Endothelial cell of umbilical vein (primary cell): ENCODE measurements at regions of chr19 and their contacts with region 1.

Region 1: DNA sequence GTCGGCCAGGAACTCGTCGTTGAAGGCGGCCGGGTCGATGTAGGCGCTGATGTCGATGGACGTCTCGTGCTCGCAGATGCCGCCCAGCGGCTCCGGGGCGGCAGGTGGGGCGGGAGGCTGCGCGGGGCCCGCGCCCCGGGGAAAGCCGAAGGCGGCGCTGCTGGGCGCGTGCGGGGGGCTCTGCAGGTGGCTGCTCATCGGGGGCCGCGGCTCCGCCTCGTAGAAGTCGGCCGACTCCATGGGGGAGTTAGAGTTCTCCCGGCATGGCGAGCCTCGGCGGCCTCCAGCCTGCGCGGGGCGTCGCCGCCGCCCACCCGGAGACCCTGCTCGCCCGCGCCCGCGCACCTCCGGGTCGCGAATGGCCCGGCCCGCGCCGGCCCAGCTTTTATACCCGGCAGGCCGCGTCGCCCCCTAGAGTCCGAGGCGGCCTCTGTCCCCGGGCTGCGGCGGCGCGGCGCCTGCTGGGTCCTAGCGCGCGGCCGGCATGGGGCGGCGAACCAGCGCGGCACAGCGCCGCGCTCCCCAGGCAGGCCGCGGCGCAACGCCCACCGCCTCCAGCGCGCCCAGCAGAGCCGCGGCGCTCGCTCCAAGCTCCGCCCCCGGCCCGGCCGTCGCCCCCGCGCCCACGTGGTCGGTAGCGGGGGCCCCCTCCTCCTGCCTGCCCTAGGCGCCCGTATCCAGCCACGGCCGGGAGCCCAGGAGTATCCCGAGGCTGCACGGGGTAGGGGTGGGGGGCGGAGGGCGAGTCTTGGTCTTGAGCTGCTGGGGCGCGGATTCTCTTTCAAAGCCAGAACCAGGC is at the start of gene CEBPA:
- DNase-seq: peak; percentile 60
- H3K4me3 ChIP-seq: peak within 1 kb of the TSS; percentile 40 to 64 (median 58)
- H3K27ac ChIP-seq: no peak within 1 kb of the TSS
- H3K4me1 ChIP-seq: peaks cover 9% of the 10 kb centered on the region
- H3K27me3 ChIP-seq: peaks cover 25 to 46% of the 10 kb centered on the region in 2 experiments
- CTCF ChIP-seq: peak; percentile 42 to 52
- POLR2A ChIP-seq: no peak
- total RNA-seq, gene CEBPA: not detected in 2 replicates

Region 2: DNA sequence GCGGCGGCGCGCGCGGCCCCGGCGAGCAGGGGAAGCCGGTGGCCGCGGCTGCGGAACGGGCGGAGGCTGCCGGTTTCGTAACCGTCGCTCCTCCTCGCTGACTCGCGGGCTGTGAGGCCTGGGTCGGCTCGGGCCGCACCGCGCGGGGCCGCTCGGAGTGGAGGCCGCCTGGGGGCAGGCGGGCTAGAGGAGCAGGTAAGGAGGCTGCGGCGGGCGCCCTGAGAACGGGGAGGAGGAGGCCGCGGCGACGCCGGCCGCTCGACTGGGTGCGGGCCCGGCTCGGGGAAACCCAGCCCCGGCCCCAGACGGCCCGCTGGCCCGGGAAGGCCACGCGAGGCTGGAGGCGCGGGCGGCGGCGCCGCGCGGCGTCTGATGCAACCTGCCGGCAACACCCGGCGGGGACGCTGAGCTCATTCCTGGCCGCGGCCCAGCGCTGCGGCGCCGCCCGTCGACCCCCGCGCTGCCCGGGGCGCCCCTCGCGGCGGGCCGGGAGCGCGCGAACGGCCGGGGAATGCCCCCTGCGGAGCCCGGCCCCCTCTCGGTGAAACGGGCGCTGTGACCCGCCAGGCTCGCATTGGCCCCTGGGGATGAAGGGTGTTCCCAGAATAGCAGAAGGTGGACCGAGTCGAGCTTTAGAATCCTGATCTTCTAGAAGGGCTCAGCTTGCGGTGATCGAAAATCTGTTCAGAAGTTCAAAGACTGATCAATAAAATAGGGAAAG is 71.5 kb after region 1 on chr19 and contains the start of gene CEBPG:
- CTCF ChIA-PET with region 1: interaction called, 12 read pairs
- POLR2A ChIA-PET with region 1: no interaction called
- dilution Hi-C with region 1: no loop called
- intact Hi-C with region 1: loop called (anchors 1 kb)
- DNase-seq: peak; percentile 54
- H3K4me3 ChIP-seq: peak within 1 kb of the TSS; percentile 81 to 97 (median 94)
- H3K27ac ChIP-seq: peak within 1 kb of the TSS; percentile 96
- H3K4me1 ChIP-seq: peaks cover 46% of the 10 kb centered on the region
- H3K27me3 ChIP-seq: peaks cover 0 to 1% of the 10 kb centered on the region in 2 experiments
- CTCF ChIP-seq: peak; percentile 23 to 26
- POLR2A ChIP-seq: no peak
- total RNA-seq, gene CEBPG: 24.3 and 24.6 TPM in 2 replicates